ENCODE measurements at regions of chr6 and their contacts with region 1.

Region 1: GRCh38 chr6:26553635-26554446 is 15.7 kb downstream of the HMGN4 start:
- DNase-seq: peak; percentile 49 to 93 (median 77)
- ATAC-seq: peak; percentile 42 to 52
- H3K4me3 Mint-ChIP-seq: no peak overlapping the region
- H3K27ac Mint-ChIP-seq: peak overlapping the region in 1 of 10 donors; percentile 17
- H3K4me1 Mint-ChIP-seq: peaks cover 11 to 26% (median 19%) of the 10 kb centered on the region in 4 donors
- H3K27me3 Mint-ChIP-seq: peaks cover 0 to 2% (median 0%) of the 10 kb centered on the region in 5 donors

Region 2: DNA sequence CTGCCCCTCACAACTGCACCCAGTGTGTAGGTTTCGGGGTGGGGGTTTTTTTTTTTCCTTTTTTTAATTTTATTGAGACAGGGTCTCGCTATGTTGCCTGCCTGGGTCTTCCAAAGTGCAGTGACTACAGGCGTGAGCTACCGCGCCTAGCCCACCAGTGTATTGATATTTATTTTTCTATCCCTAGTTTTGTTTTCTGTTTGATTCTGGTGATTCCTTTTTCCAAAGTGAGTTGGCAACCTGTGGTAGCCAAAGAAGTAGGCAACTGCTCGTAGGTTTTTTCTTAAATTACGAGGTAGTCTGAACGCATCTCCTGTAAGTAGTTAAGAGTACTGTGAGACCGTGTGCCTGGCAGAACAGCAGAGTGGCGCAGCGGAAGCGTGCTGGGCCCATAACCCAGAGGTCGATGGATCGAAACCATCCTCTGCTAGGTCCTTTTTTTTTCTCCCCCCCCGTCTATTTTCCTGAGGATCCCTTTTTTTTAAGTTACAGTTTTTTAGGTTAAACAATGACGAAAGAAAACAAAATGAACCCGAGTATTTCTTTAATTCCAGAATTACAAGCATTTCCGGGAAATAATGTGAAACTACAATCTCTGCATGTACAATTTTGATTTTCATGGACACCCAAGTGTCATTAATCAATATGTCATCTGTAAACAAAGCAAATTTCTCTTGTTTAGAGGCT is 267.5 kb before region 1 on chr6:
- POLR2A ChIA-PET with region 1: no interaction called
- DNase-seq: peak; percentile 56 to 91 (median 82)
- ATAC-seq: peak; percentile 5 to 11
- H3K4me3 Mint-ChIP-seq: peak overlapping the region; percentile 84 to 96 (median 91)
- H3K27ac Mint-ChIP-seq: peak overlapping the region; percentile 95 to 100 (median 98)
- H3K4me1 Mint-ChIP-seq: peaks cover 16 to 33% (median 29%) of the 10 kb centered on the region in 4 donors
- H3K27me3 Mint-ChIP-seq: peaks cover 0 to 7% (median 0%) of the 10 kb centered on the region in 5 donors

Region 3: DNA sequence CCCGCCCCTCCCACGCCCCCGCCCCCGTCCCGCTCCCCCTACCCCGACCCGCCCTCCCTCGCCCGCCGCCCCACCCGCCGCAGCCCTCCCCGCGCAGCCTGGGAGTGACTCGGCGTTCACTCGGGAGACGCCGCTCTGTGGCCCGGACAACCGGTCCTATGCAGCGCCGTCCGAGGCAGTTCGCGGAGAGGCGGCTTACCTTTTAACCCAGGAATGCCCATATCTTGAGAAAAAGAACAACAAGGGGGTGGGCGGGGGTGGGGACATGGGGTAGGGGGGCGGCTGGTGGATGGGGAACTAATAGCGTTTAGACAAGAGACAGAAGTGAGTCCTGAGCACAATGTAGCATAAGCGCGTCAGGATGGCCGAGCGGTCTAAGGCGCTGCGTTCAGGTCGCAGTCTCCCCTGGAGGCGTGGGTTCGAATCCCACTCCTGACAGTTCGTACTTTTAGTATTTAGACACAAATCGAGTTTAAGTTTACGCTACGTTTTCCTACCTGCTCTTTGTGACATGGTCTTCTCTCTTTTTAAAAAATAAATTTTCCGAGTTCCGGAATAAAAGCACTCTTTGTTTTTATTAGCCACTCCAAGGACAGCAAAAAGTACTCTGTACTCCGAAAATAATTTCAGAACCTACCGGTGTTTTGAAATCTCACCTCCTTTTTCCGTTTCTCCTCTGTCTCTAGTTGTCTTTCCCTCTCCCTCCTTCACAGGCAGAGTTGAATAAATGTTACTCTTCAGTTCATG is 32.8 kb before region 1 on chr6:
- POLR2A ChIA-PET with region 1: interaction called, 13 read pairs
- DNase-seq: peak; percentile 76 to 92 (median 86)
- ATAC-seq: peak; percentile 70 to 82
- H3K4me3 Mint-ChIP-seq: peak overlapping the region; percentile 73 to 97 (median 89)
- H3K27ac Mint-ChIP-seq: peak overlapping the region; percentile 67 to 98 (median 91)
- H3K4me1 Mint-ChIP-seq: peaks cover 13 to 41% (median 34%) of the 10 kb centered on the region in 4 donors
- H3K27me3 Mint-ChIP-seq: peaks cover 0 to 3% (median 0%) of the 10 kb centered on the region in 5 donors

Region 4: DNA sequence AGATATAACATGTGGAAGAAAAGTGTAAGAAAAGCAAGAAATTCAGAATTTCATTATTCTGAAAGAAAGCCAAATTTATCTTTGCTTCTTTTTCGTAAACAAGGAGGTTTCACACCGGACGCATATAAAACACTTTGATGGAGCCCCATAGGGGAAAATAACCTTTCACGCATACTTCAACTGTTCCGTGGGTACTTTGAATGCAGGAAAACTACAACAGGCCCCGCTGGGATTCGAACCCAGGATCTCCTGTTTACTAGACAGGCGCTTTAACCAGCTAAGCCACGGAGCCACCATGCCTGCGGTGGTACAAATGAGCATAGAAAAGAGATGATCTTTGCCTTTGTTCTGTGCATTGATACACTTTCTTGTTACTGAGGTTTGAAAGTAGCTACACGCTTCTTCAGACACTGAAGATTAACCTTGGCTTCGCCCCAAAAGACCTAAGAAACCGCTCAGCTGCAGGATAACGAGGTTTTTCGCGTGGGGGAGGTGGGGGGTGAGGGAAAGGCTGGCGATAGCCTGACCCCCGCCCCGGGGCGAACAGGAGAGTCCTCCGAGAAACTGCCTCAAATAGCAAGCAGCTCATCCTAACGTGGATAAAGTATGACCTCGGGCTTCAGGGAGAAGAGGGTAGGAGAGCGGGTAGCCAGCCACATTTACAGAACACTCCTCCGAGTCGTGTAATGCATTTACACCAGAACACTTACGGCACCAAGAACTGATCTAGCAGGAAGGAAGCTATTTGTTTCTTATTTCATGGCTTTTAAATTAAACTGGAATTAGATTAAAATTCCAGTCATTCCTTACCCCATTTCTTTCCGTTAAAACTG is 20.9 kb before region 1 on chr6:
- POLR2A ChIA-PET with region 1: interaction called, 82 read pairs
- DNase-seq: peak; percentile 68 to 97 (median 94)
- ATAC-seq: peak; percentile 49 to 51
- H3K4me3 Mint-ChIP-seq: peak overlapping the region; percentile 91 to 99 (median 97)
- H3K27ac Mint-ChIP-seq: peak overlapping the region; percentile 91 to 99 (median 94)
- H3K4me1 Mint-ChIP-seq: peaks cover 36 to 67% (median 62%) of the 10 kb centered on the region in 4 donors
- H3K27me3 Mint-ChIP-seq: peaks cover 0 to 12% (median 0%) of the 10 kb centered on the region in 5 donors

Region 5: GRCh38 chr6:26568601-26569432 is 15.0 kb after region 1 on chr6:
- POLR2A ChIA-PET with region 1: interaction called, 28 read pairs
- DNase-seq: peak; percentile 93 to 99 (median 99)
- ATAC-seq: peak; percentile 80 to 82
- H3K4me3 Mint-ChIP-seq: peak overlapping the region; percentile 91 to 100 (median 95)
- H3K27ac Mint-ChIP-seq: peak overlapping the region; percentile 92 to 100 (median 98)
- H3K4me1 Mint-ChIP-seq: peaks cover 15 to 33% (median 30%) of the 10 kb centered on the region in 4 donors
- H3K27me3 Mint-ChIP-seq: peaks cover 0 to 4% (median 0%) of the 10 kb centered on the region in 5 donors

Region 6: GRCh38 chr6:27374824-27375612 is 821.2 kb after region 1 on chr6:
- POLR2A ChIA-PET with region 1: no interaction called
- DNase-seq: peak; percentile 46 to 84 (median 66)
- ATAC-seq: peak; percentile 95 to 98
- H3K4me3 Mint-ChIP-seq: peak overlapping the region; percentile 79 to 98 (median 92)
- H3K27ac Mint-ChIP-seq: peak overlapping the region; percentile 70 to 95 (median 86)
- H3K4me1 Mint-ChIP-seq: peaks cover 6 to 33% (median 21%) of the 10 kb centered on the region in 4 donors
- H3K27me3 Mint-ChIP-seq: peaks cover 0 to 3% (median 0%) of the 10 kb centered on the region in 5 donors